IMR-90 (cell line): ENCODE measurements at regions of chr9 and their contacts with region 1.

Region 1: DNA sequence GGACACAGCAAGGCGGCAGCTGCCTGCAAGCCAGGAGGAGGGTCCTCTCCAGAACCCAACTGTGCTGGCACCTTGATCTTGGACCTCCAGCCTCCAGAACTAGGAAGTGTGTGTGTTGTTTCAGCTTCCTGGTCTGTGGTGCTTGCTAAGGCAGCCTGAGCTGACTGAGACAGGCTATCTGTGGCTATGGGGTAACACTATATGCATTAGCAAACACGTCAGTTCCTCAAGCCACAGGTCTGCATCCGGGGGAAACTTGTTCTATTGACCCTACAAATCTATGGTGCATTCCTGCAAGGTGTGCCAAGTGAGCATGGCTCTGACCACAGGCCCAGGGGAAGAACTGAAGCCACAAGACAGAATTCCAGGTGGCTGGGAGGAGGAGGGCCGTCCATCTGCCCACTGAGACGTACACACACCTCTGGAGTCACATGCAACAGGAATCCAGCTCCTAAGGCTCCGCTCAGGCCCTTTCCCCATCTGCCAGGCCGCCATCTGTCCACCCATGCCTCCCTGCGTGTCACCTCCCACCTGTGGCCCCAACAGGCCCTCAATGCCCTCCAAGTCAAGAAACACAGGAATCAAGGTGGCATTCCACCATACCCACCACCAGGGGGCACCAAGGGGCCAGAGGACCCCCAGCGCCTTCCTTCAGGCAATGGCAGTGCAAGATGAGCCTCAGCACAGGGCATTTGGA is 174.9 kb downstream of the ROR2 start:
- DNase-seq: peak; percentile 58
- ATAC-seq: peak; percentile 18
- H3K4me3 ChIP-seq: no peak overlapping the region
- H3K27ac ChIP-seq: no peak overlapping the region
- H3K4me1 ChIP-seq: peaks cover 34% of the 10 kb centered on the region
- H3K27me3 ChIP-seq: no peaks in the 10 kb centered on the region
- CTCF ChIP-seq: peak; percentile 77
- POLR2A ChIP-seq: peak; percentile 41; the same call in 1 of the 2 replicates
- RAD21 ChIP-seq: peak; percentile 94

Region 2: DNA sequence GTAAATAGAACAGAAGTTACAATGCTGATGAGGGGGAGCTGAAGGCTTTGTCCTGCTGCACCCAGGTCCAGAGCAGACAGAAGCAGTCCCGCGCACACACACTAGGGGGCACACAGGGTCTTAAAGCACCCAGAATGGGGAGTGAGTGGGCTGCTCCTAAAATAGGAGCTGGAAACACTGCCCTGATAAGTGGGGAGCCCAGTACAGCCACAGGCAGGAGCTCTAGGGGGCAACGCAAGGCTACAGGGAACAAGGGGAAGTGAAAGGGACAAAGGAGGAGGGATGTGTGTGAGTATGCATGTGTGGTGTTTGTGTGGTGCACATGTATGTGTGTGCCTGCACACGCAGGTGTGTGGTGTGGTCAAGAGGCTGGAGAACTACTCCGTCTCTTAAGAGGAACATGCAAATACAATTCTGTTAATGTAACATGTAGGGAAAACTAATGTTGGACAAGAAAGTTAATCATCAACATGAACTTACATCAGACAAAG is 16.6 kb before region 1 on chr9:
- CTCF ChIA-PET with region 1: interaction called, 14 read pairs
- POLR2A ChIA-PET with region 1: no interaction called
- dilution Hi-C with region 1: no loop called
- in situ Hi-C with region 1: no loop called
- intact Hi-C with region 1: no loop called
- DNase-seq: peak; percentile 58
- ATAC-seq: peak; percentile 95
- H3K4me3 ChIP-seq: no peak overlapping the region
- H3K27ac ChIP-seq: no peak overlapping the region
- H3K4me1 ChIP-seq: no peaks in the 10 kb centered on the region; the same call in 1 of the 2 replicates
- H3K27me3 ChIP-seq: no peaks in the 10 kb centered on the region; the same call in 1 of the 2 replicates
- CTCF ChIP-seq: peak; percentile 68
- POLR2A ChIP-seq: no peak
- RAD21 ChIP-seq: peak; percentile 76

Region 3: GRCh38 chr9:91817493-91818224 is 42.5 kb after region 1 on chr9:
- CTCF ChIA-PET with region 1: no interaction called
- POLR2A ChIA-PET with region 1: no interaction called
- dilution Hi-C with region 1: no loop called
- in situ Hi-C with region 1: no loop called
- intact Hi-C with region 1: loop called (anchors 5 kb)
- DNase-seq: peak; percentile 95
- ATAC-seq: peak; percentile 82
- H3K4me3 ChIP-seq: no peak overlapping the region; the same call in 1 of the 2 replicates
- H3K27ac ChIP-seq: peak overlapping the region; percentile 85
- H3K4me1 ChIP-seq: peaks cover 41% of the 10 kb centered on the region
- H3K27me3 ChIP-seq: peaks cover 13% of the 10 kb centered on the region; the same call in 1 of the 2 replicates
- CTCF ChIP-seq: no peak
- POLR2A ChIP-seq: no peak
- RAD21 ChIP-seq: no peak; the same call in 1 of the 2 replicates

Region 4: DNA sequence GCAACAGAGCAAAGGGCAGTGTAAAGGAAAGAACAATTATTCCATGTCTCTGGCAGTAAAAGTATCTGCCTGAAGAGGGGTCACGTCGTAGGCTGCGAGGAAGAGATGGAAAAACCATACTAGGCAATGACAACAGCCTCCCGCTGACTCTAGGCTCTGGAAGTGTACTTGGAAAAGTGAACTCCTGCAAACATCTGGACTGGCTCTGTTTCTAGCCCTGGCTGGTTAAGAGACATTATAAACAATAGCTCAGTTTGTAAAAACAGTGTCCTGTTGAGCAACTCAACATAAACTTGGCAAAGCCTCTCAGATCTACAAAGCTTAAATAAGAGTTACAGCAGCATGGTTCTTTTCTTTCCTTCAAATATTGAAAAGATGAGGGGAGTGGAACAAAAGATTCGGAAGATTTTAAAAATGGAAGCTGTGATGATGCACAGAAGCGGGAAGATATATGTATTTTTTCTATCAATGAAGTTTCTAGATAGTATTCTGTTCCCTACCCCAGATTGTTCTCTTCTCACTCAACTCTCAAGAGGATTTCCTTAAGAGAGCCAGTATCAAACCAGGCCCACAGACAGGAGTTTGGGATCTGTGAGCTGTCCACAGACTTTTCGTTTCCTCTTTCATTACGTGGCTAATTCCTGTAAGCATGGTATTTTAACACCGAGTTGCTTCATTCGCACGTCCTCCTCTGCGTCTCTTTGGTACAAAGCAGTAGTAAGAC is 260.7 kb after region 1 on chr9:
- CTCF ChIA-PET with region 1: no interaction called
- POLR2A ChIA-PET with region 1: no interaction called
- dilution Hi-C with region 1: no loop called
- in situ Hi-C with region 1: no loop called
- intact Hi-C with region 1: loop called (anchors 10 kb)
- DNase-seq: peak; percentile 94
- ATAC-seq: peak; percentile 91
- H3K4me3 ChIP-seq: no peak overlapping the region
- H3K27ac ChIP-seq: peak overlapping the region; percentile 99
- H3K4me1 ChIP-seq: peaks cover 25% of the 10 kb centered on the region
- H3K27me3 ChIP-seq: no peaks in the 10 kb centered on the region
- CTCF ChIP-seq: no peak
- POLR2A ChIP-seq: no peak
- RAD21 ChIP-seq: no peak

Region 5: DNA sequence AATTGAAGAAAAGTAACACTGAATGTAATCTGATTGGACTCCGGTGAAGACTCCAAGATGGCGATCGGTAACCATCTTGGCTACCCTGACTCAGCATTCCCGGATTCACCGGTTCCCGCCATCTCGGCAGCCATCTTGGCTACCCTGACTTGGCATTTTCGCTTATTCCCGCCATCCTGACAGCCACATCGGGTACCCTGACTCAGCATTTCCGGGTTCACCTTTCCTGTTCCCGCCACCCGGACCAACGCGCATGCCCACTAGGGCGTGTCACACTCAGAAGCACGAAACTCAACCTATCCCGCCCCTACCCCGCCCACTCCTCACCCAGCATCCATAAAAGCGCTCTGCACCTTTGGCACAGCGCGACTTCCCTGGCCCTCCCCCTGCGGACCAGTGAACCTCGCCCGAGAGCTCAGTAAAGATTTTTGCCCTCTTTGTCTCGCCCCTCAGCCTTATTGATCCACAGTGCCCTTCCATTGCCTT is 322.9 kb after region 1 on chr9:
- CTCF ChIA-PET with region 1: interaction called, 3 read pairs
- POLR2A ChIA-PET with region 1: no interaction called
- dilution Hi-C with region 1: no loop called
- in situ Hi-C with region 1: no loop called
- intact Hi-C with region 1: loop called (anchors 2 kb)
- DNase-seq: peak; percentile 30
- ATAC-seq: no peak
- H3K4me3 ChIP-seq: no peak overlapping the region
- H3K27ac ChIP-seq: peak overlapping the region; percentile 38; the same call in 1 of the 2 replicates
- H3K4me1 ChIP-seq: peaks cover 8% of the 10 kb centered on the region
- H3K27me3 ChIP-seq: no peaks in the 10 kb centered on the region
- CTCF ChIP-seq: no peak
- POLR2A ChIP-seq: no peak
- RAD21 ChIP-seq: no peak

Region 6: DNA sequence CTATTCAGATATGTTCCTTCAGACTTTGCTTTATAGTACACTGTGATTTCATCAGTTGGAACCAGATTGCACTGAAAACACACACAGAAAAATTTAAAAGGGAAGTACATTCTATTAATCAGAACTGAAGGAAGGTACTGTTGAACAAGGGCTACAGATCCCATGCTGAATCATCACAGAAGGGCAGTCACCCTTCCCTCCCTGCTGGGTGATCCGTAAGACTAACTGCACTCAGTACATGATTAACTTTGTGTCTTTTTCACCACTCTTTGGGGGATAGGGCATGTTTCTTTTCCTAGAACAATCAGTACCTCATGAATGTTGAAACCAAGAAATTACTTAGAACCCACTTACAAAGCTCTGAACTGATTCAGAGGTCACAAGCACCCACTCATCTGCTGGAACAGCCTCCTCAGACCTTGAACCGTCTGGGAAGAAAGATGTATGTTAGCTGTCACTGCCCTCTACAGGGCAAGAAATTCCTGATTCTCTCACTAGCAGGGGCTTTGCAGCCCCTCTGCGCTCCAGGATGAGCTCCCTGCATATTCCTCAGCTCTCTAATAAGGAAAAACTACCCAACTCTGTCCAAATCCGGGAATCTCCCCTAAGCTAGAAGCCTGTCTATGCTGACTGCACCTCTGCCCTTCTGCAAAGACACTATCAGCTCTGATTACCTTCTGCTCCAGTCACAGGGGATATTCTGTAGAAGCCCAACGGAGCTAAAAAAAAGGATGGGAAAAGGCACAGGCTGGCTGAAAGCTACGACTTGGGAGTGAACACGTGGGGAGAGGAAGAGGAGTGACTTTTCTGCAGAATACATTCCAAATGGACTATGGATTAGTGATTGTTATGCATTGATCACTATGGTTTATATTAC is 467.3 kb after region 1 on chr9:
- CTCF ChIA-PET with region 1: no interaction called
- POLR2A ChIA-PET with region 1: no interaction called
- dilution Hi-C with region 1: no loop called
- in situ Hi-C with region 1: no loop called
- intact Hi-C with region 1: loop called (anchors 10 kb)
- DNase-seq: peak; percentile 87
- ATAC-seq: peak; percentile 45
- H3K4me3 ChIP-seq: no peak overlapping the region
- H3K27ac ChIP-seq: peak overlapping the region; percentile 99
- H3K4me1 ChIP-seq: peaks cover 36% of the 10 kb centered on the region
- H3K27me3 ChIP-seq: no peaks in the 10 kb centered on the region
- CTCF ChIP-seq: peak; percentile 56
- POLR2A ChIP-seq: peak; percentile 31; the same call in 1 of the 2 replicates
- RAD21 ChIP-seq: peak; percentile 56